Activated B cell treated with CpG ODN at 0.5 μM for 24 hours (primary cell): ENCODE measurements at regions of chr7 and their contacts with region 1.

Region 1: DNA sequence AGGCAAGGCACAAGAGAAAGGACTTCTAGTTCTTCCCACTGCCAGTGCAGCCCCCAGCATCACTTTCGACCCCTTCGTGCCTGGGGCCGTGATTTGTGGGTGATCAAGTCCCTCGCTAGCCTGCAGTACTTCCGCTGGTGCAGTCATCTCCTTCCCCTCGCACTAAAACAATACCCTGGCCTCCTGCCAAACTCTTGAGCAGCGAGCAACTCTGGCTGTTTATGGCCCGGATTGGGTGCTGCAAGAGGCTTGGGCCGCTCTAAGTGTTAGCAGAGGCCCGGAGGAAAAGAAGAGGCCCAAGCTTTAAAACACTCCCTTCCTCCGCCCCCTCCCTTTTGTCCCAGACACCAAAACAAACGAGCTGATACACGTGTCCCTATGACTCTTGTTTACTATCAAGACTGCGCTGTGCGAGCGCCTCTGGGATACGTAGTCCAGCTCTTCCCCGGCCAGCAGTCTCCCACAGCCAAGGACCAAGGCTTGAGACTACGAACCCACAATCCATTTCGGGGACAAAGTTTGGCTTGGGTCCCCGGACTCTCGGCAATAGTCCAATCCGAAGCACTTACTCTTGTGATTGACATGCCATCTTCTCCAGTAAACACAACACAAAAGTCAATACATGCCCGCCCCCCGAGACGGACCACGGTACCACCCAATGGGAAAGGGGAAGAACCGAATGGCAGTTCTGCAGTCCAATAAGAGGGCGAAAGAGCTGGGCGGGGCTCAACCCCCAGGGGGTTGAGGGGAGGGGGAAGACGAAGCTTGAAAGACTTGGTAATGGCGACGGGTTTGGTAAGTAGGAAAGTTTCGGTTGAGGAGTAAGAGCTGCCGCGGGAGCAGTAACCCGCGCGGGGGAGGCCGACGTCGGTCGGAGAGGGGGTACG is at the start of gene HBP1:
- DNase-seq: peak; percentile 84
- ATAC-seq: peak; percentile 80
- H3K4me3 Mint-ChIP-seq: peak within 1 kb of the TSS; percentile 99
- H3K27ac Mint-ChIP-seq: peak within 1 kb of the TSS; percentile 99
- H3K4me1 Mint-ChIP-seq: peaks cover 45% of the 10 kb centered on the region
- H3K27me3 Mint-ChIP-seq: peaks cover 6% of the 10 kb centered on the region
- CTCF ChIP-seq: no peak
- total RNA-seq, gene HBP1: 53.6 and 59.9 TPM in 2 replicates

Region 2: GRCh38 chr7:106089647-106090046 is 1078.8 kb before region 1 on chr7:
- CTCF ChIA-PET with region 1: no interaction called
- POLR2A ChIA-PET with region 1: no interaction called
- intact Hi-C with region 1: loop called (anchors 10 kb)
- DNase-seq: no peak
- ATAC-seq: peak; percentile 88
- H3K4me3 Mint-ChIP-seq: peak overlapping the region; percentile 65
- H3K27ac Mint-ChIP-seq: peak overlapping the region; percentile 83
- H3K4me1 Mint-ChIP-seq: peaks cover 82% of the 10 kb centered on the region
- H3K27me3 Mint-ChIP-seq: no peaks in the 10 kb centered on the region
- CTCF ChIP-seq: no peak

Region 3: GRCh38 chr7:106552645-106553445 is 615.6 kb before region 1 on chr7:
- CTCF ChIA-PET with region 1: no interaction called
- POLR2A ChIA-PET with region 1: interaction called, 5 read pairs
- intact Hi-C with region 1: loop called (anchors 2 kb)
- DNase-seq: peak; percentile 27
- ATAC-seq: peak; percentile 92
- H3K4me3 Mint-ChIP-seq: peak overlapping the region; percentile 39
- H3K27ac Mint-ChIP-seq: peak overlapping the region; percentile 89
- H3K4me1 Mint-ChIP-seq: peaks cover 39% of the 10 kb centered on the region
- H3K27me3 Mint-ChIP-seq: no peaks in the 10 kb centered on the region
- CTCF ChIP-seq: no peak

Region 4: GRCh38 chr7:106767498-106768323 is 400.8 kb before region 1 on chr7:
- CTCF ChIA-PET with region 1: no interaction called
- POLR2A ChIA-PET with region 1: interaction called, 10 read pairs
- intact Hi-C with region 1: no loop called
- DNase-seq: no peak
- ATAC-seq: peak; percentile 77
- H3K4me3 Mint-ChIP-seq: peak overlapping the region; percentile 80
- H3K27ac Mint-ChIP-seq: peak overlapping the region; percentile 87
- H3K4me1 Mint-ChIP-seq: peaks cover 21% of the 10 kb centered on the region
- H3K27me3 Mint-ChIP-seq: no peaks in the 10 kb centered on the region
- CTCF ChIP-seq: no peak

Region 5: GRCh38 chr7:106895246-106895864 is 273.1 kb before region 1 on chr7:
- CTCF ChIA-PET with region 1: no interaction called
- POLR2A ChIA-PET with region 1: interaction called, 16 read pairs
- intact Hi-C with region 1: no loop called
- DNase-seq: peak; percentile 42
- ATAC-seq: peak; percentile 93
- H3K4me3 Mint-ChIP-seq: peak overlapping the region; percentile 46
- H3K27ac Mint-ChIP-seq: peak overlapping the region; percentile 82
- H3K4me1 Mint-ChIP-seq: peaks cover 77% of the 10 kb centered on the region
- H3K27me3 Mint-ChIP-seq: no peaks in the 10 kb centered on the region
- CTCF ChIP-seq: no peak

Region 6: DNA sequence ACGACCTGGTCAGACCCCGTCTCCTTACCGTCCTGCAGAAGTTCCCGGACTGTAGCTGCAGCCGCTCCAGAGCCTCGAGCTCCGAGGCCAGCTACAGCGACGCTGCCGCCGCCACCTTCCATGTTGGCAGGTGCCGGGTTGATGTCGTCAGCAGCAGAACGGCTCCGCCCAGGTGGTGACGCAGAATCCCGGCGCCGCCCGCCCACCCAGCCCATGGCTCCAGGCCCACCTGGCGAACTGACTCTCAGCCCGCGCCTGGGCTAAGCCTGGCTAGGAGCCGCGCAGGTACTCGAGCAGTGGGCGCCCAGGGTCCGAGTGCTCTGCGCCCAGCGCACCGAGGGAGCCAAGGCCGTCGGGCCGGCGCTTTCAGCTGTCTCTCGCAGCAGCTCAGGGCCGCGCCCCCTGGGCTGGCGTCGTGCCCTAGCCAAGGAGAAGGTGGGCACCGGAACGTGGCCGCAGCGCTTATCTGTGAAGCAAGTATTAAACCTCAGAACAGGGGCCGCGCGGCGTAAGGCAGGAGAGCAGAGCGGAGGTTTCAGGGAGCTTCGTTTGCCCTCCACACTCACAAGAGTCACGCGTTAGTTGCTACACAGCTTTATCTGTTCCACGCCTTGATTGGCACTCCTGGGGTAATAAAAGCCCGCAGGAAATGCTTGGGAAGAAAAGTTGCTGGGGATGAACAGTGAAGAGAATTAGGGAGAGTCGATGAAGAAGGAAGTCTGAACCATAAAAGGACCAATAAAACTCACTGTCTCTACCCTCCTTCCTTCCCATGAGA is 395.5 kb after region 1 on chr7 and contains the starts of genes COG5 and DUS4L:
- CTCF ChIA-PET with region 1: no interaction called
- POLR2A ChIA-PET with region 1: interaction called, 4 read pairs
- intact Hi-C with region 1: loop called (anchors 5 kb)
- DNase-seq: peak; percentile 83
- ATAC-seq: peak; percentile 93
- H3K4me3 Mint-ChIP-seq: peak within 1 kb of the TSS; percentile 93
- H3K27ac Mint-ChIP-seq: peak within 1 kb of the TSS; percentile 82
- H3K4me1 Mint-ChIP-seq: peaks cover 43% of the 10 kb centered on the region
- H3K27me3 Mint-ChIP-seq: no peaks in the 10 kb centered on the region
- CTCF ChIP-seq: no peak
- total RNA-seq, gene COG5: 40.6 and 47.0 TPM in 2 replicates
- total RNA-seq, gene DUS4L: 11.0 and 14.6 TPM in 2 replicates

Region 7: DNA sequence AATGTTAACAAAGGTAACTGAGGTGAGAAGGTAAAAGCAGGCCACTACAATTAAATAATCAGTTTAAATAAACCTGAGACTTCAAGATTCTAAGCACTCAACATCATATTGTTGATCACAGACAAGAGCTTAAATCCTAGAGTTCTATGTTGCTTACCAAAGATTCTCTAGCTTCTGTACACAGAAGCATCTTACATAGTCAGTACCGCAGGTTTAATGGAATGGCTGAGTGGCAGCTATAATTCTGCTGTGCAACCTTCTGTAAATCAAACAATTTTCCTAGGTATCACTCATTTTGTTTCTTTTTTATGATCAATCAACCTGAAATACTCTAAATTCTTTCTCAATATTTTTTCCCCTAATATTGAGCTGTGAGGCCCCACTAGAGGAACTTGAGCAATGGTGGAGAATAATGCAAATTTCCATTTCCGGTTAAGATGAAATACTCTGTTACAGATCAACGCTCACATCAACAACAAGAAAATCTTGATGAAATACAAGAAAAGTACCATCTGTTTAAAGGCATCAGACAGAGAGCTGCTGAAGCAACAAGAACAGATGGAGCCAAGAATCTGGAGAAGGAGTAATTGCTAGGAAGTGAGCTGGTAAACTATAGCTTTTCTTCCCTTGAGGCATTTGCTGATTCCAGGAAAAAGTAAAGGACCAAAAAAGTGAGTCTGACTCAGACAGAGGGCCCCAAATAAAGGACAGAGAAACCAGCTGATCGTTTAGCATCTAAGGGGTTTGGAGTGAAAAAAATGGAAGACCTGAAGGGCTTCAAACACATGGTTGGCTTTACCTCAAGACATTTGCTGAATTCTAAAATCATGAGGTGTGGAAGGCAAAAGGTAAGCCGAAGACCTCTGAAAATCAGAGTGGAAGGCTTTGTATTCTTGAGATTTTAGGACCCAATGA is 1334.9 kb after region 1 on chr7:
- CTCF ChIA-PET with region 1: no interaction called
- POLR2A ChIA-PET with region 1: no interaction called
- intact Hi-C with region 1: loop called (anchors 10 kb)
- DNase-seq: no peak
- ATAC-seq: peak; percentile 95
- H3K4me3 Mint-ChIP-seq: peak overlapping the region; percentile 74
- H3K27ac Mint-ChIP-seq: peak overlapping the region; percentile 100
- H3K4me1 Mint-ChIP-seq: peaks cover 51% of the 10 kb centered on the region
- H3K27me3 Mint-ChIP-seq: no peaks in the 10 kb centered on the region
- CTCF ChIP-seq: no peak